PC-3 (cell line): ENCODE measurements at regions of chr3 and their contacts with region 1.

Region 1: GRCh38 chr3:27312044-27312668 is 57.0 kb downstream of the NEK10 start:
- DNase-seq: peak; percentile 86
- ATAC-seq: peak; percentile 76
- H3K4me3 ChIP-seq: no peak overlapping the region
- H3K27ac ChIP-seq: peak overlapping the region; percentile 16
- H3K4me1 ChIP-seq: peaks cover 20% of the 10 kb centered on the region
- H3K27me3 ChIP-seq: no peaks in the 10 kb centered on the region
- CTCF ChIP-seq: peak; percentile 87

Region 2: GRCh38 chr3:27289769-27290413 is 22.3 kb before region 1 on chr3:
- CTCF ChIA-PET with region 1: interaction called, 3 read pairs
- POLR2A ChIA-PET with region 1: no interaction called
- intact Hi-C with region 1: loop called (anchors 2 kb)
- DNase-seq: peak; percentile 60
- ATAC-seq: peak; percentile 71
- H3K4me3 ChIP-seq: no peak overlapping the region
- H3K27ac ChIP-seq: 0 out of 2 replicates have a peak overlapping the region, but pooled peaks have one; percentile 3
- H3K4me1 ChIP-seq: peaks cover 13% of the 10 kb centered on the region
- H3K27me3 ChIP-seq: no peaks in the 10 kb centered on the region
- CTCF ChIP-seq: no peak

Region 3: GRCh38 chr3:27357665-27358258 is 45.6 kb after region 1 on chr3:
- CTCF ChIA-PET with region 1: no interaction called
- POLR2A ChIA-PET with region 1: no interaction called
- intact Hi-C with region 1: loop called (anchors 1 kb)
- DNase-seq: peak; percentile 83
- ATAC-seq: peak; percentile 90
- H3K4me3 ChIP-seq: no peak overlapping the region
- H3K27ac ChIP-seq: no peak overlapping the region
- H3K4me1 ChIP-seq: peaks cover 13% of the 10 kb centered on the region
- H3K27me3 ChIP-seq: no peaks in the 10 kb centered on the region
- CTCF ChIP-seq: peak; percentile 87

Region 4: DNA sequence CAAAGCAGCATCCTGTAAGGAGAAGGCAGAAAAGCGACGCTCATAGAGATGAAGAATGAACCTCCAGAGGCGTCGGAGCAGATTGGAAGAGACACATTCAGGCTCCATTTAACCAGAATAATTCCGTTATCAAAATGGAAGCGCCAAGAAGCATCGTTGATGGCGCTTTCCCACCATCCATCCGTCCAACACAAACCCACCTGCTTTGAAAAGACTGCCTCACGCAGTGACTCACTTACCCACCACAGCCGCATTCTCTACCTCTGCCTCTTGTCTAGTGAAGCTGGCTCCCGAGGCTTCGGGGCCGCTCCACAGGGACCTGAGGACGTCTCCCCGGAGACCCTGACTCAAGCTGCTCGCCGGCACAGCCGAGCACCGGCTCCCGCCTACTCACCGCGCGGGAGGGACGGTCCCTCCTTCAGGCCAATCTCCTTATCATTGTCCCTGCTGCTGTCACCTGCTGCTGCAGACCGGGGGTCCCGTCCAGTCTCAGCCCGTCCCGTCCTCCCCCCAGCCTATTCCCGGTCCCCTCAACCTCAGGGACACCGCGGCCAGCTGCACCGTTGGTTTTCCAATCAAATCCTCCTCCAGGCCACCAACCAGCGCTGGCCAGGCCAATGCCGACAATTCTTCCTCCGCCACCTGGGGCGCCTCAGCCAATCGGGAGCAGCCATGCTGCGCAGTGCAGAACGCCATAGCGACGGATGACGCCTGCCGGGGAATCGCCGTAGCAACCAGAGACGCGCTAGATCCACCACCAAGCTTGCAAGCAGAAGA is 56.9 kb after region 1 on chr3 and contains the start of gene NEK10:
- CTCF ChIA-PET with region 1: no interaction called
- POLR2A ChIA-PET with region 1: no interaction called
- intact Hi-C with region 1: loop called (anchors 1 kb)
- DNase-seq: peak; percentile 97
- ATAC-seq: peak; percentile 97
- H3K4me3 ChIP-seq: peak within 1 kb of the TSS; percentile 86
- H3K27ac ChIP-seq: no peak within 1 kb of the TSS
- H3K4me1 ChIP-seq: no peaks in the 10 kb centered on the region
- H3K27me3 ChIP-seq: no peaks in the 10 kb centered on the region
- CTCF ChIP-seq: no peak
- total RNA-seq, gene NEK10: 0.98 and 1.7 TPM in 2 replicates

Region 5: DNA sequence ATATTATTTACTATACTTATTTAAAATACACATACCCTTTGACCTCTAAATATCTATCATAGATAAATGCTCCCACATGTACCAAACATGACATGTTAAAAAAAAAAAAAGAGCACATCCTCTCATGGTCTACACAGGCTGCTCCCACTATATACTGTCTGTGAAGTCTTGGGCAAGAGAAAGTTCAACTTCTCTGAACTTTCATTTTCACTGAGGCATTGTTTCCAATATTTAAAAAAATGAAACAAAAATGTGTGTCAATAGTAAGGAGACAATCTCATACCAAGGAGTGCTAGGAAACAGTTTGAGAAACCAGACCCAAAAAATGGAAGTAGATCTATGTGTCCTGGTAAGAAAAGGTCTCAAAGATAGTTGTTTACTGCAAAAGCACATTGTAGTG is 142.8 kb after region 1 on chr3:
- CTCF ChIA-PET with region 1: no interaction called
- POLR2A ChIA-PET with region 1: no interaction called
- intact Hi-C with region 1: loop called (anchors 5 kb)
- DNase-seq: no peak
- ATAC-seq: no peak
- H3K4me3 ChIP-seq: no peak overlapping the region
- H3K27ac ChIP-seq: no peak overlapping the region
- H3K4me1 ChIP-seq: peaks cover 20% of the 10 kb centered on the region
- H3K27me3 ChIP-seq: no peaks in the 10 kb centered on the region
- CTCF ChIP-seq: no peak

Region 6: GRCh38 chr3:27467545-27467944 is 155.4 kb after region 1 on chr3:
- CTCF ChIA-PET with region 1: no interaction called
- POLR2A ChIA-PET with region 1: no interaction called
- intact Hi-C with region 1: loop called (anchors 5 kb)
- DNase-seq: peak; percentile 72
- ATAC-seq: peak; percentile 81
- H3K4me3 ChIP-seq: no peak overlapping the region
- H3K27ac ChIP-seq: no peak overlapping the region
- H3K4me1 ChIP-seq: 0 out of 2 replicates have a peak, but pooled peaks cover 10% of the 10 kb centered on the region
- H3K27me3 ChIP-seq: no peaks in the 10 kb centered on the region
- CTCF ChIP-seq: peak; percentile 79

Region 7: DNA sequence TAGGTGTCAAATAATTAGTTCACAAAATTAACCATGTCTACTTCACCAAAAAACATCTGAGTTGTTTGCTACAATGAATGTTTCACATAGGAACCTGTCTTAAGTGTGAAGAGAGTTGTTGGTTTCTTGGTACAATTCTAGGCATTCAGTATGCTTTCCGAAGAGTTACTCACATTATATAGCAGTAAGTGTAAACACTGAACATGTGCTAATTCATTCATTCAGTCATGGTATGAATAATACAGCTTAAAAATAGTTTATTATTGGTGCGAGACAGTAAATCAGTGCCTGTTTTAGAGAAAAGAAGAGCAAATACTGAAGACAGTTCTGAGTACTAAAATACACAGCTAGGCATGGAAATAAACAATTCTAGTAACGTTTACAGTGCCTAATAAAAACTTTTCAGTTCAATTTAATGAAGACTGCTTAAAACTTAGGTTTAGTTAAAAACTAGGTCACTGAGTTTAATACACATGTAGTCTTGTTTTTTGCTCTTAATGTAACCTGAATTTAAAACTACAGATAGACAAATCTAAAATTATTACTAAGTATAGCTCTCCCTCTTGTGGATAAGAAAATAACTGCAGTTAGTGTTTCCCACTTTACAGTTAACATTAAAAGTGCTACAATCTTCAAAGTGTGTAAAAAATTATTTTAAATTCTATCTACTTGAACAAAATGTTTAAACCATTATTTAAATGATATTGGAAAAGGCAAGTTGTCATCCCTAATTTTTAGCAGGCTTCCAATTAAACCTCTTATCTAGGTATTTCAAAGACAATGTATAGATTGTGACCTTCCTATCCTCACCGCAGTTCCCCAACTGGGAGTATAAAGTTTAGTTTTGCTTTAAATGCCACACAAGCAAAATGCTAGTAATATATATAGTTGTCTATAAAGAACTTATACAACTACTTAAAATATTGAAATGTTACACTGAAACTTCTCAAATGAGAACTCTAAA is 1016.3 kb after region 1 on chr3:
- CTCF ChIA-PET with region 1: no interaction called
- POLR2A ChIA-PET with region 1: no interaction called
- intact Hi-C with region 1: loop called (anchors 10 kb)
- DNase-seq: peak; percentile 75
- ATAC-seq: peak; percentile 33; the same call in 1 of the 2 replicates
- H3K4me3 ChIP-seq: no peak overlapping the region
- H3K27ac ChIP-seq: no peak overlapping the region
- H3K4me1 ChIP-seq: no peaks in the 10 kb centered on the region
- H3K27me3 ChIP-seq: no peaks in the 10 kb centered on the region
- CTCF ChIP-seq: peak; percentile 82